ENCODE measurements at regions of chr21 and their contacts with region 1.

Region 1: DNA sequence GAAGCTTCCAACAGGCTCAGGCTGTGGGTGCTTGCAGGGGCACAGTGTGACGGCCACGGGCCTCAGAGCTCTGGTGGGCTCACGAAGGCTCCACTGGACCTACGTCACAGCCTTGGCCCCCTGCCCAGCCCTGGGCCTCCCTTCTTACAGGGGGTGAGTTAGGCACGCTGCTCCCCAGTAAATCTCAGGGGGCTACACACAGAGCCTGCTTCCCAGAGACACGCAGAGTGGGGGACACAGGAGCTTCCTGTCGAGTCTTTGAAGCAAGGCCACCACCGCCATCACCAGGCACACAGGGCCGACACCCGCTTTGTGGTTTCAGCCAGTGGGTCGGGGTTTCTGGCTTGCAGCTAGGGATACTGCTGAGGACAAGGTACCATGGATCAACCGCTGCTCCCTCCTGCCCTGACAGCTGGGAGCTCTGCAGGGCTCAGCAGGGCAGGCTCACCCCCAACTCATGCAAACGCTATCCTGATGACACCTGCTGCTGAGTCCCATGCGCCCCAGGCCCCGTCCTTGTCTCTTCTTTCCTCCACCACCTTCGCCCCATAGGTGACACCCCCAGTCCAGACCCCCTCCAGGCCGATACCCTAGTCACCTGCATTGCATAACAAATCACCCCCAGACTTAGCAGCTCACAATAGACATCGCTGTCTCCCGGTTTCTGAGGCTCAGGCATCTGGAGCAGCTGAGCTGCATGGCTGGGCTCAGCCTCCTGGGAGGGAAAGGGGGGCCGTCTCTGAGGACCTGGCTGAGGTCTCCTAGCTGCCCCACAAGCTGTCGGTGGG is 5.5 kb upstream of the CFAP410 start:
- DNase-seq: no peak
- ATAC-seq: peak; percentile 8
- H3K4me3 ChIP-seq: no peak overlapping the region
- H3K27ac ChIP-seq: no peak overlapping the region
- H3K4me1 ChIP-seq: peaks cover 0 to 4% of the 10 kb centered on the region in 2 donors
- H3K27me3 ChIP-seq: no peaks in the 10 kb centered on the region

Region 2: DNA sequence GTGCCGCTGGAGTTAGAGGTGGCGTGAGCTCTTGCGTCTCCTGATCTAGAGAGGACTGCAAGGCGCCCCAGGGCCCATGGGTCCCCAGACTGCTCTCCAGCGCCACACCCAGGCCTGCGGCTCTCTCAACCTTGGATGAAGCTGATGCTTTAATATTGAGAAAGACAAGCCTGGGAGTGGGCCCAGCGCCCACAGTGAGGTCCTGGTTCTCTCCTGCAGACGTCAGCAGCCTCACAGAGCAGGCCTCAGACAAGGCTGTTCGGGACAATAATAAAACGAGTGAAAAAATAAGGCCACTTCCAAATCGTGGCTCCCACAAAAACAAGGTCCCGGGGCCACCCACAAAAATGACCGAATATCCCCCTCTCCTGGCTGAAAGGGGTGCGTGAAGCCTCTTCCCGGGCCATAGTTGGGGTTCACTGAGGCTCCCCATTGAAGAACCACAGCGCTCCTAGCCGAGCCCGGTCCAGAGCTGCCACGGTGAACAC is 77.0 kb before region 1 on chr21:
- intact Hi-C with region 1: no loop called
- DNase-seq: peak in 1 of 2 donors; percentile 48
- ATAC-seq: no peak
- H3K4me3 ChIP-seq: no peak overlapping the region
- H3K27ac ChIP-seq: no peak overlapping the region
- H3K4me1 ChIP-seq: no peaks in the 10 kb centered on the region
- H3K27me3 ChIP-seq: no peaks in the 10 kb centered on the region

Region 3: DNA sequence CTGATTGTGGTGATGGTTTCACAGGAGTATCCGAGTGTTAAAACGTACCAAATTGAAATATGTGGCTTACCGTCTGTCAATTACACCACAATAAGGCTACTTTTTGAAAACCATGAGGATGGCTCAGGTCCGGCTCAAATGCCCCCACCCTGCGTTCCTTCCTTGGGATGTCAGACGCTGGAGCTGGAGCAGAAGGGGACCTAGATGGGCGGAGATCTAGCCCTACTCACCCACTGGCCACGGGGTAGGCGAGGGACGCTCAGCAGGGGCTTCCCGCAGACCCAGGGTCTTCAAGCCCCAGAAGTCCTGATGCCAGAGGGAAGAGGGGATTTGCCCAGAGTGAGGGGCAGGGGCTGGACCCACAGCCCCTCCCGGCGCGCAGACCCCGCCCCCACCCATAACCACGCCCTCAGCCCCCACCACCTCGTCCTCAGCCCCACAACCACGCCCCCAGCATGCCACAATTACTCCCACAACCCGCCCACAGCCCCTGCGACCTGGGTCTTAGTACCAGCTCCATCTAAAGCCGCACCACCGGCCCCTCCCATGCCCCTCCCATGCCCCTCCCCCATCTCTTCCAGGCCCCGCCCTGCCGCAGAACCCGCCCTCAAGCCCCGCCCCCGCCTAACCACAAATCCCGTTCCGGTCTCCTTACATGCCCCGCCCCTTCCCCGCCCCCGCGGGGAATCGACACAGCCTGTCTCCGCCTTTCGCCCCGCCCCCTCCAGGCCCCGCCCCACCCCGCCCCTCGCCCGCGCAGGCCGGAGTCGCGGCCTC is 110.2 kb after region 1 on chr21 and contains the start of gene LRRC3:
- intact Hi-C with region 1: loop called in 1 of 2 experiments (anchors 5 kb)
- DNase-seq: peak; percentile 91 to 93
- ATAC-seq: peak; percentile 68
- H3K4me3 ChIP-seq: peak within 1 kb of the TSS; percentile 67 to 73
- H3K27ac ChIP-seq: no peak within 1 kb of the TSS
- H3K4me1 ChIP-seq: no peaks in the 10 kb centered on the region
- H3K27me3 ChIP-seq: no peaks in the 10 kb centered on the region
- total RNA-seq, gene LRRC3: 1.6 to 5.3 TPM

Region 4: DNA sequence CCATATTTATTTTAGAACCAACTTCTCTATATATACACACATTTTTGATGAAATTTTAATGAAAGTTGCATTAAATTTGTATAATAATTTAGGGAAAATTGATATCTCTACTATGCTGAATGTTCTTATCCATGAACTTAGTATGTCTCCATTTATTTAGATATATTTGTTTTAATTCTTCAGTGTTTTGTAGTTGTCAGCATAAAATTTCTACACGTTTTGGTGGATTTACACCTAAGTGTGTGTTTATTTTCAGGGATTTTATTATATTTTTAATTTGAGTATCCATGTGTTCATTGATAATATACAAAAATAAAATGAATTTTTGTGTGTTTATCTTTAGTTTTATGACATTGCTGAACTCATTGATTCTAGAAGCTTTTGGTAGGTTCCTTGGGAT is 1335.5 kb after region 1 on chr21:
- intact Hi-C with region 1: no loop called
- DNase-seq: no peak
- ATAC-seq: no peak
- H3K4me3 ChIP-seq: no peak overlapping the region
- H3K27ac ChIP-seq: no peak overlapping the region
- H3K4me1 ChIP-seq: no peaks in the 10 kb centered on the region
- H3K27me3 ChIP-seq: no peaks in the 10 kb centered on the region